A673 (cell line): ENCODE measurements at regions of chr2 and their contacts with region 1.

Region 1: DNA sequence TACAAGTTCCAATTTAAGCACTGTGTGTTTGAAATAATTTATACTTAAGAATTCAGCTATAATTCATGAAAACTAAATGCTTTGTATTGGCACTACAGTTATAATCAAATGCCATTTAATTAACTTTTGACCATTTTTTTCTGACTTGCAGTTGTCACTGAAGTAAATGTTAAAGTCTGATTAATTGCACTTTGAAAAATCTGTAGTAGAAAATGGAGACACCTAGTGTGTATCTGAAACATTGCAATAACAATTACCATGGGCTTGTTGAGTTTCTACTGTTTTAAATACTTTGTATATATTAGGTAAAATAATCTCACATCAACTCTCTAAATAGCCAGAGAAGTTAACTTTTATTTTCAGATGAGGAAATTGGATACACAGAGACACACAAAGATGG is 458.6 kb upstream of the FSIP2 start:
- DNase-seq: peak; percentile 37
- H3K4me3 ChIP-seq: no peak overlapping the region
- H3K27ac ChIP-seq: no peak overlapping the region
- H3K4me1 ChIP-seq: no peaks in the 10 kb centered on the region
- H3K27me3 ChIP-seq: no peaks in the 10 kb centered on the region
- CTCF ChIP-seq: peak; percentile 74

Region 2: DNA sequence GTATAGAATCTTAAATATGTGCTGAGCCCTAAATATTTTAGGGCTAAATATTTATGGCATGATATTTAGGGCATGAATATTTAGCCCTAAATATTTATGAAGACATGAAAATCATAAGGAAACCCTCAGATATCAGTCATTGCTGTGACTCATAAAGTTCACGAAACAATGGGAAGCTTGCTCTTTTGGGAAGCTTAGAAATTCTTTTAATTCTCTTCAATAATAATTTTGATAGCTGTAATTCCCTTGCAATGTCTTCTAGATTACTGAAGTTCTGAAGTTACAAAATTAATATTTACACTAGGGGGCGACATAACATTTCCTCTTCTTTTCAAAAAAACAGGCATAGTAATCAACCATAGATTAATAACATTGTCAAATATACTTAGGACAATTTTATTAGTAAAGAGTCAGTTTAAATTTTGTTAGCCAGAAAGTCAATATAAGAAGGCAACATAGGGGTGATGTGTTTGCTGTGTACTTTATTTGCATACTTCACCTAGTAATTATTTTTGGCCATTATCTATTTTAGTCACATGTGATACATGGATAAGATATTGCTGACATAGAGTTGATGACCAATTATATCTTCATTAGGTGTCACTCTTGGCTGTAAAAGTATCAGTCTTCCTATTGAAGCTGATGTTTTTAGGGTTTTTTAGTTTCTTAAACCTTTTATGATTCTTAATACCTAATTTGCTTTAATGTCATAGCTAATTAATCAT is 668.5 kb before region 1 on chr2:
- CTCF ChIA-PET with region 1: no interaction called
- POLR2A ChIA-PET with region 1: no interaction called
- intact Hi-C with region 1: loop called (anchors 5 kb)
- DNase-seq: peak; percentile 68
- H3K4me3 ChIP-seq: no peak overlapping the region
- H3K27ac ChIP-seq: no peak overlapping the region
- H3K4me1 ChIP-seq: no peaks in the 10 kb centered on the region
- H3K27me3 ChIP-seq: no peaks in the 10 kb centered on the region
- CTCF ChIP-seq: peak; percentile 66

Region 3: GRCh38 chr2:185208261-185208660 is 71.7 kb before region 1 on chr2:
- CTCF ChIA-PET with region 1: no interaction called
- POLR2A ChIA-PET with region 1: no interaction called
- intact Hi-C with region 1: loop called (anchors 5 kb)
- DNase-seq: peak; percentile 62
- H3K4me3 ChIP-seq: no peak overlapping the region
- H3K27ac ChIP-seq: no peak overlapping the region
- H3K4me1 ChIP-seq: no peaks in the 10 kb centered on the region
- H3K27me3 ChIP-seq: no peaks in the 10 kb centered on the region
- CTCF ChIP-seq: peak; percentile 66